Calu3 (cell line): ENCODE measurements at regions of chr3 and their contacts with region 1.

Region 1: DNA sequence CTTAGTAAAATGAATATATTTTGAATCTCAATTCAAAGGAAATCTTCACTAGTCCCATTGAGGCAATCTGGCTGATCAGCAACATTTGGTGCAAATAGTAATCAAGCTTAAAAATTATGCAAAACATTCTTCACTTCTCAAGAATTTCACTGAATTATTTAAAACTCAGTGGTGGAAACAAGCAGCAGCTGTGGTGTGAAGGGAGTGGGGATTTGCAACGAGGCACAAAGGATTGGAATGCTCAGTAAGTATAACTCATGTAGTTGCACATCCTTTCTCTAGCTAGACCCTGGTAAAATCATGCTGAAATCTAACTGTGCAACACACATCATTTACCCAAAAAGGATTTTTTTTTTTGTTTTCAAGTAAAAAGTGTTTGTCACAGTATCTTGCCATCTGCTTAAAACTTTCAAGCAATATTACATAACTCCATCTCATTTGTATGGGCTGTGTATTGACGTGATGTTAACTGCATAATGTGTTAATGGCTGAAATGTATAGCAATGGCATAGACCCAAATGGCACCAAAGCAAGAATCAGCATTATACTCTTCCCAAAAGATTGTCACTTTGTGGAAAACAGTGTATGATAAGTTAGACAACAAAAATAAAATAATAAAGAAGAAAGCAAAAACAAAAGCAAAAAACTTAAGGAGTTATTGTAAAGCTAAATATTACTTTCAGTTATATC is 816.6 kb downstream of the EPHA3 start:
- DNase-seq: no peak
- H3K4me3 Mint-ChIP-seq: no peak overlapping the region
- H3K27ac Mint-ChIP-seq: no peak overlapping the region
- H3K4me1 Mint-ChIP-seq: no peaks in the 10 kb centered on the region
- H3K27me3 Mint-ChIP-seq: no peaks in the 10 kb centered on the region
- CTCF ChIP-seq: no peak

Region 2: GRCh38 chr3:89877230-89877629 is 46.8 kb before region 1 on chr3:
- CTCF ChIA-PET with region 1: no interaction called
- intact Hi-C with region 1: no loop called
- DNase-seq: no peak
- H3K4me3 Mint-ChIP-seq: no peak overlapping the region
- H3K27ac Mint-ChIP-seq: no peak overlapping the region
- H3K4me1 Mint-ChIP-seq: no peaks in the 10 kb centered on the region
- H3K27me3 Mint-ChIP-seq: no peaks in the 10 kb centered on the region
- CTCF ChIP-seq: no peak

Region 3: GRCh38 chr3:89974903-89975519 is 50.9 kb after region 1 on chr3:
- CTCF ChIA-PET with region 1: no interaction called
- intact Hi-C with region 1: loop called (anchors 10 kb)
- DNase-seq: no peak
- H3K4me3 Mint-ChIP-seq: no peak overlapping the region
- H3K27ac Mint-ChIP-seq: no peak overlapping the region
- H3K4me1 Mint-ChIP-seq: no peaks in the 10 kb centered on the region
- H3K27me3 Mint-ChIP-seq: no peaks in the 10 kb centered on the region
- CTCF ChIP-seq: no peak

Region 4: DNA sequence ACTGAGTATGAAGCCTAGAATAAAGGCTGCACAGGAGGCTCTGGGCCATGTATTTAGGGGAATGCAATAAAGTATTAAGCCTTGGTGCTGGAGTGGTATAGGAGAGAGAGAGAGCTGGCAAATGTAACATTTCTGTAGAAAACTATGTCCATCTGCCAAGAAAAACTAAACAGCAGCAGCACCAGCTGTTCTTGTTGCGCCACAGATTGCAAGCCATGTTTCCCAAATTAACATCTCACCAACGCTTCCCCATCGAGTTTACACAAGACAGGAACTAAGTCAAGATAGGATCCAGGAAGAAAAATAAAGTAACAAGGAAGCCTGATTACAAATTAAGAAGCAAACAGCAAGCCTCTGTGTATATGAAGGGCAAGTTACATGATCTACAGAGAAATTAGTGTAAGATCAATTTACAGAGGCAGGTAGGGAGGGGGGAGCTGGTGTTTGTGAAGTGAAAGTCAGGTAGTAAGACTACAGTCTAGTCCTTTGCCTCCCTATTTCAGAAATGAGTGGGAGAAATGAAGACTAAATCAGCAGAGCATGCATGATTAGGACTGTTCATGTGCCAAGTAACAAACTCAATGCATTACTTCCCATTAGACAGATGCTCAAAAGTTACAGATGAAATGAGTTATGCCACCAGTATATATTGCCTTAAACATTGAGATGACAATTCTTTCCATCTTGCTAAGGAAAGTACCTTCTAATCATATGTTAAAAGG is 83.9 kb after region 1 on chr3:
- CTCF ChIA-PET with region 1: no interaction called
- intact Hi-C with region 1: loop called (anchors 10 kb)
- DNase-seq: no peak
- H3K4me3 Mint-ChIP-seq: no peak overlapping the region
- H3K27ac Mint-ChIP-seq: no peak overlapping the region
- H3K4me1 Mint-ChIP-seq: peaks cover 16% of the 10 kb centered on the region
- H3K27me3 Mint-ChIP-seq: no peaks in the 10 kb centered on the region
- CTCF ChIP-seq: no peak